T-cell (primary cell): ENCODE measurements at regions of chr10 and their contacts with region 1.

Region 1: DNA sequence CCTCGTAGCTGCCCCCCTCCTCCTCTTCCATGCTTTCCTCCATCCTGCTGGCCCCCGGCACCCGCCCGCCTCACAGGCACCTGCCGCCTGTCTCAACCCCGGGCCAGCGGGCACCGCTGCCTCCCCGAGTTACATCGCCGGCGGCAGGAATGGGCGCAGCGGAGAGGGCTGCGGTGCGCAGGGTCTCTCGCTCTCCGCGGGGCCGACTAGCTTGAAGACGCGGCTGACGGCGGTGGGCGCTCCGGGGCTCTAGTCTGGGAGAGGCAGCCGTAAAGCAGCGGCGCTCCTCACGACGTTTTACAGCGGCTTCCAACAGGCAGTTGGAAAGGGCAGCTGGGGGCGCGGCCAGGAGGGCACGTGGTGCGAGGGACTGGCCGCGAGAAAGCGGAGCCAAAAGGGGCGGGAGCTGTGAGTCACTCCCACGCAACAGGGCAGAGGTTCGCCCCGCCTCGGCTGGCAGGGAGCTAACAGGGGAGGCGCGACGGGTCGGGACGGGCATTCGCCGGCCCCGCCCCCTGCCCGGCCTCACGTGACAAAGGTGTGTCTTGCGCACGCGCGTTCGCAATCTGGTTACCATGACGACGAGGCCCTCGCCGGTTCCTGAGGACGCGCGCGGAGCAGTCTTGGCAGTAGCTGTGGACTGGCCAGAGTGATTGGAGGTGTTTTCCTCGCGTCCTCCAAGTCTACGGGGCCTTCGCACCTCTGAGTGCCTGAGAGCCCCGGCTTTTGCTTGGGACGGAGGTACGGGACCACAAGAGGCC is at the start of gene CACUL1:
- DNase-seq: peak; percentile 99 to 100 (median 100)
- ATAC-seq: peak; percentile 98 to 99 (median 98)
- H3K4me3 ChIP-seq: peak within 1 kb of the TSS; percentile 88 to 93
- H3K4me3 Mint-ChIP-seq: peak within 1 kb of the TSS; percentile 89 to 92 (median 92)
- H3K27ac ChIP-seq: peak within 1 kb of the TSS; percentile 64
- H3K27ac Mint-ChIP-seq: peak within 1 kb of the TSS; percentile 84 to 88
- H3K4me1 ChIP-seq: peaks cover 17 to 23% of the 10 kb centered on the region in 2 experiments
- H3K4me1 Mint-ChIP-seq: peaks cover 37 to 48% (median 38%) of the 10 kb centered on the region in 3 donors
- H3K27me3 ChIP-seq: peaks cover 0 to 5% of the 10 kb centered on the region in 2 experiments
- H3K27me3 Mint-ChIP-seq: peaks cover 0 to 3% of the 10 kb centered on the region in 2 donors
- total RNA-seq, gene CACUL1: 26.3 to 35.2 (median 27.9) TPM

Region 2: DNA sequence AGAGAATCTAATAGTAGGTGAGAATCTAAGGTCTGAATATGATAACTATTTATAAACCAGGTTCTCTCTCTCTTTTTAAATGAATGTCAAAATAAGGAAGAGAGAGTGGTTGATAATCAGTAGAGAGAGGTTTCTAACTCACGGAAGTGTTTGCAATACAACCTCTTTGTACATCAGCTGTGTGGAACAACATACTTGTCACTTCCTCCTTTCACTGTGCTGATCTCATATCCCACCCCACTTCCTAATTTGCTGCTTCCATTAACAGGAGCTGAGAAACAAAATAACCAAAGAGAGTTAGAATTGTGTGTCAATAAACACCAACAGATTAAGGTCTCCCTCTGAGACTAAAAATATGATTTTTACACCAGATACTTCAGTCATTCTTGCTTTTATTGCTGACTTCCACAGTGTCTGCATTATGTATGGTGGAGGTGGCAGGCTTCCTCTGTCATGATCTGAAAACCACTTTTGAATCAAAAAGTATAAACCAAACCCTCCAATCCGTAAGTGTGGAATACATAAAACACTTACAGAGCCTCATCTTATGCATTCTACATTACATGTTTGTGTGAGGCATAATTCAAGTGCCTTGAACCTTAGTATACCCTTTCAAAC is 25.1 kb before region 1 on chr10:
- CTCF ChIA-PET with region 1: interaction called, 3 to 18 read pairs
- POLR2A ChIA-PET with region 1: no interaction called
- DNase-seq: peak in 3 of 35 experiments; percentile 12 to 47 (median 35)
- ATAC-seq: peak; percentile 58 to 73 (median 63)
- H3K4me3 ChIP-seq: no peak overlapping the region
- H3K4me3 Mint-ChIP-seq: peak overlapping the region in 2 of 3 donors; percentile 24 to 67
- H3K27ac ChIP-seq: peak overlapping the region; percentile 47
- H3K27ac Mint-ChIP-seq: peak overlapping the region; percentile 89 to 91
- H3K4me1 ChIP-seq: peaks cover 23 to 47% of the 10 kb centered on the region in 2 experiments
- H3K4me1 Mint-ChIP-seq: peaks cover 56 to 76% (median 63%) of the 10 kb centered on the region in 3 donors
- H3K27me3 ChIP-seq: no peaks in the 10 kb centered on the region
- H3K27me3 Mint-ChIP-seq: no peaks in the 10 kb centered on the region